GM13977 (cell line): ENCODE measurements at regions of chr21 and their contacts with region 1.

Region 1: DNA sequence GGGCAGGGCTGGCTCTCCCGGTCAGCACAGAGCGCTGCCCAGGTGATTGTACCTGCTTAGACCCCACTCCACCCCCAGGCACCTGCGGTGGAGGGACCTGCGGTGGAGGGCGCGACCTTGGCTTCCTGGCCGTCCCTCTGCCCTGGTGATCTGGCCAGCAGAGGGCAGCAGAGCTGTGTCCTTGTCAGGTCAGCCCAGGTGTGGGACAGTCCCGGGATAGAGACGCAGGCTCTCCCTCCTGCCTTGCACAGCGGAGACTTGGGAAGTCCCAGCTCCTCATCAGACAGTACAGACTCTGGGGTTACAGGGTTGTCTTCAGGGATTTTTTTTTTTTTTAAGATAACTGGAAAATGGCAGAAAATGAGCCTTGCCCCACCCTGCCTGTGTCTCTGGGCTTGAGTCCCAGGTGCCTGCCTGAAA is 10.0 kb downstream of the SLX9 start:
- DNase-seq: peak; percentile 91
- CTCF ChIP-seq: peak; percentile 96

Region 2: GRCh38 chr21:44583089-44583799 is 366.5 kb before region 1 on chr21:
- in situ Hi-C with region 1: no loop called
- DNase-seq: no peak
- CTCF ChIP-seq: no peak

Region 3: GRCh38 chr21:45140346-45140940 is 190.7 kb after region 1 on chr21:
- in situ Hi-C with region 1: loop called (anchors 5 kb)
- DNase-seq: peak; percentile 90
- CTCF ChIP-seq: peak; percentile 86